IMR-90 (cell line): ENCODE measurements at regions of chrX and their contacts with region 1.

Region 1: GRCh38 chrX:9785944-9786797 is at the start of gene SHROOM2:
- DNase-seq: no peak
- ATAC-seq: peak; percentile 72
- H3K4me3 ChIP-seq: peak within 1 kb of the TSS; percentile 87
- H3K27ac ChIP-seq: no peak within 1 kb of the TSS; the same call in 1 of the 2 replicates
- H3K4me1 ChIP-seq: peaks cover 4% of the 10 kb centered on the region; the same call in 1 of the 2 replicates
- H3K27me3 ChIP-seq: peaks cover 19% of the 10 kb centered on the region
- CTCF ChIP-seq: no peak
- POLR2A ChIP-seq: no peak
- RAD21 ChIP-seq: no peak
- total RNA-seq, gene SHROOM2: 8.1 TPM in 2 replicates

Region 2: GRCh38 chrX:9873952-9874351 is 87.8 kb after region 1 on chrX:
- CTCF ChIA-PET with region 1: no interaction called
- POLR2A ChIA-PET with region 1: no interaction called
- dilution Hi-C with region 1: no loop called
- in situ Hi-C with region 1: no loop called
- intact Hi-C with region 1: loop called (anchors 5 kb)
- DNase-seq: peak; percentile 49
- ATAC-seq: peak; percentile 52; the same call in 1 of the 2 replicates
- H3K4me3 ChIP-seq: no peak overlapping the region
- H3K27ac ChIP-seq: no peak overlapping the region
- H3K4me1 ChIP-seq: peaks cover 5% of the 10 kb centered on the region; the same call in 1 of the 2 replicates
- H3K27me3 ChIP-seq: no peaks in the 10 kb centered on the region
- CTCF ChIP-seq: peak; percentile 48
- POLR2A ChIP-seq: no peak
- RAD21 ChIP-seq: peak; percentile 51